ENCODE measurements at regions of chr10 and their contacts with region 1.

Region 1: GRCh38 chr10:35336084-35336831 is at the start of gene CCNY:
- DNase-seq: peak; percentile 74 to 81 (median 77)
- H3K4me3 ChIP-seq: peak within 1 kb of the TSS; percentile 38 to 57
- H3K4me3 Mint-ChIP-seq: peak within 1 kb of the TSS; percentile 89 to 93 (median 91)
- H3K27ac ChIP-seq: peak within 1 kb of the TSS; percentile 76
- H3K27ac Mint-ChIP-seq: peak within 1 kb of the TSS; percentile 91 to 95 (median 92)
- H3K4me1 ChIP-seq: peaks cover 63% of the 10 kb centered on the region
- H3K4me1 Mint-ChIP-seq: peaks cover 49 to 80% (median 65%) of the 10 kb centered on the region in 4 donors
- H3K27me3 ChIP-seq: no peaks in the 10 kb centered on the region
- H3K27me3 Mint-ChIP-seq: no peaks in the 10 kb centered on the region
- total RNA-seq, gene CCNY: 65.9 to 66.7 TPM

Region 2: GRCh38 chr10:35090162-35090954 is 245.9 kb before region 1 on chr10 and contains the start of gene CUL2:
- CTCF ChIA-PET with region 1: no interaction called
- POLR2A ChIA-PET with region 1: interaction called, 4 read pairs
- intact Hi-C with region 1: loop called (anchors 5 kb)
- DNase-seq: peak; percentile 91 to 97 (median 93)
- H3K4me3 ChIP-seq: peak within 1 kb of the TSS; percentile 80 to 90
- H3K4me3 Mint-ChIP-seq: peak within 1 kb of the TSS; percentile 96 to 100 (median 98)
- H3K27ac ChIP-seq: peak within 1 kb of the TSS; percentile 89
- H3K27ac Mint-ChIP-seq: peak within 1 kb of the TSS; percentile 97 to 100 (median 99)
- H3K4me1 ChIP-seq: peaks cover 48% of the 10 kb centered on the region
- H3K4me1 Mint-ChIP-seq: peaks cover 37 to 57% (median 45%) of the 10 kb centered on the region in 4 donors
- H3K27me3 ChIP-seq: no peaks in the 10 kb centered on the region
- H3K27me3 Mint-ChIP-seq: peaks cover under 1 to 1% of the 10 kb centered on the region in 2 donors
- total RNA-seq, gene CUL2: 34.6 to 37.8 TPM

Region 3: GRCh38 chr10:35355971-35356724 is 19.9 kb after region 1 on chr10:
- CTCF ChIA-PET with region 1: interaction called, 4 read pairs
- POLR2A ChIA-PET with region 1: no interaction called
- intact Hi-C with region 1: loop called (anchors 2 kb)
- DNase-seq: no peak
- H3K4me3 ChIP-seq: no peak overlapping the region
- H3K4me3 Mint-ChIP-seq: peak overlapping the region in 6 of 8 donors; percentile 51 to 78 (median 60)
- H3K27ac ChIP-seq: no peak overlapping the region
- H3K27ac Mint-ChIP-seq: peak overlapping the region in 4 of 7 donors; percentile 17 to 71 (median 69)
- H3K4me1 ChIP-seq: peaks cover 65% of the 10 kb centered on the region
- H3K4me1 Mint-ChIP-seq: peaks cover 65 to 88% (median 76%) of the 10 kb centered on the region in 4 donors
- H3K27me3 ChIP-seq: no peaks in the 10 kb centered on the region
- H3K27me3 Mint-ChIP-seq: no peaks in the 10 kb centered on the region

Region 4: GRCh38 chr10:35447693-35448407 is 111.6 kb after region 1 on chr10:
- CTCF ChIA-PET with region 1: no interaction called
- POLR2A ChIA-PET with region 1: interaction called, 3 read pairs
- intact Hi-C with region 1: loop called (anchors 1 kb)
- DNase-seq: peak; percentile 56 to 76 (median 67)
- H3K4me3 ChIP-seq: no peak overlapping the region
- H3K4me3 Mint-ChIP-seq: peak overlapping the region; percentile 60 to 94 (median 78)
- H3K27ac ChIP-seq: peak overlapping the region; percentile 59
- H3K27ac Mint-ChIP-seq: peak overlapping the region; percentile 93 to 98 (median 97)
- H3K4me1 ChIP-seq: peaks cover 73% of the 10 kb centered on the region
- H3K4me1 Mint-ChIP-seq: peaks cover 61 to 82% (median 68%) of the 10 kb centered on the region in 4 donors
- H3K27me3 ChIP-seq: no peaks in the 10 kb centered on the region
- H3K27me3 Mint-ChIP-seq: no peaks in the 10 kb centered on the region

Region 5: DNA sequence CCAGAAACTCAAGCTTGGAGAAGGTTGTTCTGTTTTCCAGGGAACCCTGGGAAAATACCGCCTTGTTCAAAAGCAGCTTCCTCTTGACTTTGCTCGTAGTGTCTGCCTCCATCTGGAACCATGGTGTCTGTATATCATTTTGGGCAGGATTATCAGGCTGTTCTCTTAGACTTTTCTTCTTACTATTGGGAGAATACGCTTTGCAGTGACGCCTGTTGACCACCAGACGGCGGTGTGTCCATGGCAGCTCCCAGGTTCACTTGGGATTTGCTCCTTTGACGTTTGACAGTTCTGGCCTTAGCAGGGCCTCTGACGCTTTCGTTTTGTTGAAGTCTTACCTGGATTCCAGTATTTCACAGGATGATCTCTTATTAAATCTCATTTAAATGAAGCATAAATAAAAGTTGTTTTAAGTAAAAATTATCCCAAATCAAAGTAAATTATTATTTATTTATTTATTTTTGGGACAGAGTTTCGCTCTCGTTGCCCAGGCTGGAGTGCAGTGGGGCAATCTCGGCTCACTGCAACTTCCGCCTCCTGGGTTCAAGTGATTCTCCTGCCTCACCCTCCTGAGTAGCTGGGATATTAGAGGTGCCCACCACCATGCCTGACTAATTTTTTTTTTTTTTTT is 227.1 kb after region 1 on chr10:
- CTCF ChIA-PET with region 1: interaction called, 8 read pairs
- POLR2A ChIA-PET with region 1: no interaction called
- intact Hi-C with region 1: loop called (anchors 2 kb)
- DNase-seq: peak in 4 of 5 donors; percentile 18 to 40 (median 23)
- H3K4me3 ChIP-seq: no peak overlapping the region
- H3K4me3 Mint-ChIP-seq: peak overlapping the region in 1 of 8 donors; percentile 23
- H3K27ac ChIP-seq: no peak overlapping the region
- H3K27ac Mint-ChIP-seq: peak overlapping the region in 1 of 7 donors; percentile 29
- H3K4me1 ChIP-seq: no peaks in the 10 kb centered on the region
- H3K4me1 Mint-ChIP-seq: peaks cover 5 to 9% (median 7%) of the 10 kb centered on the region in 4 donors
- H3K27me3 ChIP-seq: no peaks in the 10 kb centered on the region
- H3K27me3 Mint-ChIP-seq: no peaks in the 10 kb centered on the region